SK-N-SH (cell line): ENCODE measurements at regions of chr6 and their contacts with region 1.

Region 1: DNA sequence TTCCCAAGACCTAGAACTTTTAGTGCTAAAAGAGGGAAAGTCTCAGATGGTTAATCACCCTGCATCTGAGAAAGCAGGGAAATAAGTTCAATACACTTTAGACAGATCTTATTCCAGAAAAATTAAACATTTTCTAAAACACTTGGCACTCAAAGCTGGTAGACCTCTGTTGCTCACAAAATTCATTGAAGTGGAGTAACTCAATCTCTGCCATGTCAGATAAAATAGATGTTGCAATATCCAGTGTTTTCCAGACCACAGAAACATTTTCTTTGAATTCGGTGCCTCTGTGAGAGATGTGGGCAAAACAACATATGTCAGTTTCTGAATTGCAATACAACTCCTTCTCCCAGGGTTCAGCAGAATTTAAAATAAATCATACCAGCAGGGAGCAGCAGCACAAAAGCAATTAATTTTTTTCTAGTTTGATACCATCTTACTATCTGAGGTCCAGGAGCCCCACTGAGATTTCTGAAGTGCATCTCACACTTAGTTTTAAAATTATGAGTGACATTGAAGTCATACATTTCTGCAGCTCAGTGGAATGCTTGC is 11.3 kb upstream of the PKHD1 start:
- DNase-seq: peak; percentile 47
- H3K4me3 ChIP-seq: no peak overlapping the region
- H3K27ac ChIP-seq: no peak overlapping the region
- H3K4me1 ChIP-seq: no peaks in the 10 kb centered on the region; a peak in 1 of 4 replicates
- H3K27me3 ChIP-seq: no peaks in the 10 kb centered on the region; the same call in 1 of the 2 replicates
- CTCF ChIP-seq: peak; percentile 32
- EP300 ChIP-seq: no peak
- RAD21 ChIP-seq: peak; percentile 61

Region 2: DNA sequence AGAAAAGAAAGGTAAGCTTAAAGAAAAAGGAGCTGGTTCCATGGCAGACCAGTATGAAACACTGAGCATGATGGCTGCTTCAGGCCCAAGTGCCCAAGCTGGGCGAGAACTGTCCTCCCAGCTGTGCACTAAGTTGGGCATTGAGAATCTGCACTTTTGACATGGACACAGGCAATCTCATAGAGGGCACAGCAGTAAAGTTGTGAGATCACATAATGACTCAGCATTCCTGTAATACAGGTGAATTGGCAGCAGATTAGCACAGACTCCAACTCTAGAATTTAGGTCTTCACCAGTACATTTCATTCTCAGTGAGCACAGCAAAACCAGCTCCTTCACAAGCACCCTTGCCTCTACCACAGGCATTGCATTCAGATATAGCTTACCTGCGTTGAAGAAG is 354.7 kb before region 1 on chr6:
- CTCF ChIA-PET with region 1: no interaction called
- POLR2A ChIA-PET with region 1: no interaction called
- DNase-seq: no peak
- H3K4me3 ChIP-seq: no peak overlapping the region
- H3K27ac ChIP-seq: no peak overlapping the region; a peak in 1 of 4 replicates
- H3K4me1 ChIP-seq: peaks cover 0 to 3% of the 10 kb centered on the region in 2 experiments; a peak in 2 of 4 replicates
- H3K27me3 ChIP-seq: no peaks in the 10 kb centered on the region
- CTCF ChIP-seq: no peak
- EP300 ChIP-seq: no peak
- RAD21 ChIP-seq: no peak

Region 3: DNA sequence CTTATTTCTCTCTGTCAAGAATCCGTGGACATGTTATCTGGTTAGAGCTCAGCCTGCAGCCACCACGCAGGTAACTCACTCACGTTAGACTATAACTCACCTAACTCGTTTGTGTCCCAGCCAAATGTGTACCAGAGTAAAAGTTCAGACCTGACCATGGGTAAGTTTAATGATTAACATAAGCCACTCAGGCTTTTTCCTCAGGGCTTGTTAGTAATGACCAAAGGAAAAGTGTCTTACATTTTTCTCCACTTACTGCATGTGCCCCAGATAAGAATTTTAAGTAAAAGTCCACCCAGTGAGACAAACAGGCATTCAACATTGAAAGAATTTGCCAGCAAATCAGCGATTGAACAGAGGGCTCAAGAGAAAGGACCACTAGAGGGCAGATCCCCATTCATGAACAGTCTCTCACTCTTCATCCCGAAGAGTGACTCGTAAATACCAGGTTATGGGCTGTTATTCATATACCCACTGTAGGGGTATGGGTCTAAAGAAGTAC is 11.2 kb before region 1 on chr6 and contains the start of gene PKHD1:
- CTCF ChIA-PET with region 1: interaction called, 13 read pairs
- POLR2A ChIA-PET with region 1: no interaction called
- DNase-seq: peak; percentile 24
- H3K4me3 ChIP-seq: no peak within 1 kb of the TSS
- H3K27ac ChIP-seq: no peak within 1 kb of the TSS
- H3K4me1 ChIP-seq: no peaks in the 10 kb centered on the region
- H3K27me3 ChIP-seq: no peaks in the 10 kb centered on the region
- CTCF ChIP-seq: peak; percentile 47
- EP300 ChIP-seq: no peak
- RAD21 ChIP-seq: 0 out of 2 replicates have a peak, but pooled peaks have one; percentile 12
- polyA plus RNA-seq, gene PKHD1: under 0.01 TPM in 1 of 2 replicates, not detected in the other

Region 4: DNA sequence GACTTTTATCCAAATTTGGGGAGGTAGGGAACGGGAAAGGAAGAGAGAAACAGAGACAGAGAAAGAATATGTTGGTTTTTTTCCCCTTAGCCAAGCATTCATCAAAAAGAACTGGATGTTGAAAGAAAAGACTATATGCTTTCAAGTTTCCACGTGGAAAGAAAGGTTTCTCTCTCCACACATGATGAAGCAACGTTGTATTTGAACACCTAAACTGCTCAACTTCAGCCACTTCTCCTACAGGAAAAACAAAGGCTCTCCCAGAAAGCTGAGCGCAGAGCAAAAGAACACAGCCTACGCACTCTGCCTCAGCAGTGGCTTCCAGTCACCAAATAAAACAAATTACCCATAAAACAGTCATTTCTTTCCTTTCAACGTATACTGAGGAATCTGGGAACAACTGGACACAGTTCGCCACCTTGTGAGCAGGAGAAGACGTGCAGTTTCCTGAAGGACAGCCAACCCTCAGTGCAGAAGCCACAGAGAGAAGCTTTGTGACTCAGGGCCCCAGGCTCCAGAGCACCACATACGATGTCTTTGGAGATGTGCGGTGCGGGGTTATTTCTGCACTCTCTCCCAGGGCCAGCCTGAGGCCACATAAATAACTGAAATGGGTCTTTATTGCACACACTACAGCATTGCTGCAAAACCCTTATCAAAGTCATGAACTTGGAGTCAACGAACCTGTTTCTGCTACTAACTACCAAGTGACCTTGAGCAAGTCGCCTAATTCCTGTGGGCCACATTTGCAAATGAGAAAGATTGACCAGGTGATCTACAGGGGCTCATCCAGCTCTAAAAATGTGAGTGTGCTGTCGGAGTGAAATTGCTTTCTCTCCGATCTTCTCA is 135.5 kb after region 1 on chr6:
- CTCF ChIA-PET with region 1: interaction called, 37 read pairs
- POLR2A ChIA-PET with region 1: no interaction called
- DNase-seq: peak; percentile 53
- H3K4me3 ChIP-seq: no peak overlapping the region; a peak in 1 of 4 replicates
- H3K27ac ChIP-seq: no peak overlapping the region
- H3K4me1 ChIP-seq: no peaks in the 10 kb centered on the region
- H3K27me3 ChIP-seq: no peaks in the 10 kb centered on the region; the same call in 1 of the 2 replicates
- CTCF ChIP-seq: peak; percentile 56
- EP300 ChIP-seq: no peak
- RAD21 ChIP-seq: peak; percentile 74